Aorta (tissue), 5 donors: ENCODE measurements at regions of chr1 and their contacts with region 1.

Region 1: DNA sequence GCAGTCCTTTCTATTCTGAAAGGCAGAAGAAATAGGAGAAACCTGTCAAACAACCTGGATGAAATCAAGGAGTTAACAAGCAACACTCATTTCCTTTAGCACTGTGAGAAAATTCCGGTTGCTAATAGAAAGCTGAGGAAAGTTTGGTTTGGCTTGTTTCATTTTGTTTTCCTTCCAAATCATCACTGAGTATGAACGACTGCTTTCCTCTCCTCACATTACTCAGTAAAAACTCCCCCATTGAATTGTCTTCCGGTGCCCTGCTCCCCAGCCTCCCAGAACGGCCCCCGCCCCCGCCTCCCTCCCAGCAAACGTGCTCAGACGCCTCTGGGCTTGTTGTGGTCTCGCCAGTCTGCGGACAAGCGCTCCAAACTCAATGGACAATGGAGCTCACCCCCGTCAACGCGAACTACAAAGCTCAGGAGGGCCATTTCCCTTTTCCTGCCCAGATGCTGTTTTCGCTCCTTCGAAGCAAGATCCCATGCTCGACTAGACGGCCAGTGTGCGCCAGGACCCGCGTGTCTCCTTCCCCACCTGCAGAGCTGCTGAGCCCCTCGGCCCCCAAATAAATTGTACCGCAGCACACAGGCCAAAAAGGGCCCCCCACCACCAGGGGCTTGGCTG is 747 bp downstream of the STX6 start:
- DNase-seq: peak; percentile 76 to 89
- ATAC-seq: peak; percentile 76
- H3K4me3 ChIP-seq: peak overlapping the region; percentile 50 to 76
- H3K27ac ChIP-seq: peak overlapping the region; percentile 0 to 65
- H3K4me1 ChIP-seq: no peaks in the 10 kb centered on the region
- H3K27me3 ChIP-seq: no peaks in the 10 kb centered on the region

Region 2: DNA sequence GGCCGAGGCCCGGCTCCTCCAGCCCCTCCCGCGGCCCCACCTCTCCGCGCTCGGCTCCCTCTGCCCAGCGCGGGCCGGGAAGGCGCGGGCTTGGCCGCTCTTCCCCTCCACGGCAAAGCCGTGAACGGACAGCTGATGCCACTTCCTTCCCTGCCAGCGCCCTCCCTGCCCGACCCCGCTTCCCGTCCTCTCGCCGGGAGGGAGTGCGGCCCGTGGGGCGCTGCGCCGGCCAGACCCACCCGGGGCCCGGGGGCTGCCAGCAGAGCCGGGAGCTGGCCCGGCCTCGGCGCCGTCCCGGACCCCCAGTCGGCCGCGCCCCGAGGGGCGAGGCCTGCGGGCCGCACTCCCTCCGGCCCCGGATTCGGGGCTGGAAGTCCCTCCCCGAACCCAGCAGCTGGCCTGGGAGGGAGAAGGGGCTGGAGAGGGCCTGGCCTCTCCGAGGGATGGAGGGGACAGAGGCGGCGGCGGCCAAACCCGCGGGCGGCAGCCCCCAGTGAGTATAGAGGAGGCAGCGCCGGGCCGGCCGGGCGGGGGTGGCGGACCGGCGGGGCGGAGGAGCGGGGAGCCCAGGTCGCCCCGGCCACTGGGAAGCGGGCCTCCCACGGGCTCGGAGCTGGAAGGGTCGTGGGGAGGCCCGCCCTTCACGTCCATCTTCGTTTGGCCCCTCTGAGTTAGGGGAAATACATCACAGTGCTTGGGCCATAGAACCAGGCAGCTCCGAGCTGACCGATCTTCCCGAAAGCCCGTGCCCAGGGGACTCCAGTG is 108.9 kb before region 1 on chr1 and contains the start of gene KIAA1614:
- intact Hi-C with region 1: loop called in 1 of 2 experiments (anchors 5 kb)
- DNase-seq: peak; percentile 63 to 85
- ATAC-seq: peak; percentile 80
- H3K4me3 ChIP-seq: peak within 1 kb of the TSS; percentile 67 to 76
- H3K27ac ChIP-seq: peak within 1 kb of the TSS; percentile 79 to 84
- H3K4me1 ChIP-seq: no peaks in the 10 kb centered on the region
- H3K27me3 ChIP-seq: no peaks in the 10 kb centered on the region
- total RNA-seq, gene KIAA1614: 9.8 to 10.5 TPM

Region 3: GRCh38 chr1:181033799-181034451 is 12.0 kb after region 1 on chr1 and contains the start of gene MR1:
- intact Hi-C with region 1: loop called in 1 of 2 experiments (anchors 1 kb)
- DNase-seq: no peak
- ATAC-seq: peak; percentile 96
- H3K4me3 ChIP-seq: peak within 1 kb of the TSS; percentile 72 to 74
- H3K27ac ChIP-seq: peak within 1 kb of the TSS; percentile 99 to 100
- H3K4me1 ChIP-seq: peaks cover 6 to 7% of the 10 kb centered on the region in 2 donors
- H3K27me3 ChIP-seq: no peaks in the 10 kb centered on the region
- total RNA-seq, gene MR1: 22.0 to 23.9 TPM

Region 4: DNA sequence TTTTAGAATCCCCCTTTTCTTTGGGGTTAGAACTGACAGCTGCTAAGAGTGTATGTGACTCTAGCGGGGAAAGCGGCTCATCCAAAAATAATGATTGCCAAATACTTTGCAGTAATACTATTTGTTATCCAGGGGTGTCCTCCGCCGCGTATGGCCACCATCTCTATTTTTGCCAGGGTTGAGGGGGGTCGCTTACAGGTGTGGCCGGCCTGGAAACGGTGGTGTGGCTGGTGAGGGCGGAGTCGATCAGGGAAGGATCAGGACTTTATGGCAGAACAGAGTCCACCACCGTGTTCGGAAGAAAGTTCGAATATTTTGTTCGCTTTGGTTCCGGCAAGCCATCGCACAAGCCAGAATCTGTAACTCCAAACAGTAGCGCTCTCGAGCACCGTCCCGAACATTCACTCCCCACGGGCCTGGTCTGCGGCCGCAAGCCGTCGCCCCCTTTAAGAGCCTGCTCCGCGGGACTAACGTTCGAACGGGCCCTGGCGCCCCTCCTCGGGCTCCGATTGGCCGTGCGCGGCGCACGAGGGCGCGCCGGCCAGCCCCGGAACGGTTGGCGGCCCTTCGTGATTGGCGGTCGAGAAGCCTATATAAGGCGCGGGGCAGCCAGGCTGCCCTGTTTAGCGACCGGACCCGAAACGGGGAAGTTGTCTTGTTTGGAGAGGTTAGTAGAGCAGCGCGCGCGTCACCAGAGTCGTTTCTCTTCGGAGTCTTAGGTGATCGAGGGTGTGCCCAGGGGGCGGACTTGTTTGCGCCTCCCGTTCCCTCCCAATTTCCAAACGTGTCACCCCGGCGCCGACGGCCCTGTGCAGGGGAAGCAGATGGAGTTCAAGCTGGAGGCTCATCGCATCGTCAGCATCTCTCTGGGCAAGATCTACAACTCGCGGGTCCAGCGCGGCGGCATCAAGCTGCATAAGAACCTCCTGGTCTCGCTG is 66.4 kb after region 1 on chr1 and contains the start of gene IER5:
- intact Hi-C with region 1: loop called in 1 of 2 experiments (anchors 5 kb)
- DNase-seq: peak; percentile 97 to 98
- ATAC-seq: peak; percentile 98
- H3K4me3 ChIP-seq: peak within 1 kb of the TSS; percentile 65 to 99
- H3K27ac ChIP-seq: peak within 1 kb of the TSS; percentile 50 to 81
- H3K4me1 ChIP-seq: peaks cover 2 to 3% of the 10 kb centered on the region in 2 donors
- H3K27me3 ChIP-seq: no peaks in the 10 kb centered on the region
- total RNA-seq, gene IER5: 11.4 to 42.2 TPM